MCF 10A (cell line): ENCODE measurements at regions of chr7 and their contacts with region 1.

Region 1: DNA sequence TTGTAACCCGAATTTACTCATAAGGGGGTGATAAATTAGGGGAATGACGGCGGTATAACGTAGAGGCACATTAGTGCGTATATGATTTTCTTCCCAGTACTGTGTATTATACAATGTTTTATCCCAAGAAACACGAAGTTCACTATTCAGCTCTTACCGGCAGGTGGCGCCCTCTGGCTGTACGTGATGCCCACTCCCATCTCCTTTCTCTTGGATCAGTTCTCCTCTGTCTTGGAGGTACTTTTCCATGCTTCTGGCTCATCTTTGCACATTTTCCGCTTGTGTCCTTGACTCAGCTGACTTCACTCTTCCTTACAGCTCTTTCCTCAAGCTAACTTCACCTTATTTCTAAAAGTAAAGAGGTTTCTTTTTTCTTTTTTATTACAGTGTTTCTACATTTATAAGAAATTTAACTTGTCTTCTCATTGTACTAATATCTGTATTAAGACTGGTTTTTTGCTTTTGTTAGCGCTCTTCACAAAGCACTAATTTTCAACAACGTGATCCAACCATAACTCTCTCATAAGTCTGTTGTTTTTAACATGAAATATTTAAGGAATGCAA is 21.3 kb downstream of the TMEM176B start:
- DNase-seq: peak; percentile 75
- H3K4me3 Mint-ChIP-seq: no peak overlapping the region
- H3K27ac Mint-ChIP-seq: no peak overlapping the region
- H3K4me1 Mint-ChIP-seq: no peaks in the 10 kb centered on the region
- H3K27me3 Mint-ChIP-seq: peaks cover 23% of the 10 kb centered on the region
- CTCF ChIP-seq: peak; percentile 76

Region 2: DNA sequence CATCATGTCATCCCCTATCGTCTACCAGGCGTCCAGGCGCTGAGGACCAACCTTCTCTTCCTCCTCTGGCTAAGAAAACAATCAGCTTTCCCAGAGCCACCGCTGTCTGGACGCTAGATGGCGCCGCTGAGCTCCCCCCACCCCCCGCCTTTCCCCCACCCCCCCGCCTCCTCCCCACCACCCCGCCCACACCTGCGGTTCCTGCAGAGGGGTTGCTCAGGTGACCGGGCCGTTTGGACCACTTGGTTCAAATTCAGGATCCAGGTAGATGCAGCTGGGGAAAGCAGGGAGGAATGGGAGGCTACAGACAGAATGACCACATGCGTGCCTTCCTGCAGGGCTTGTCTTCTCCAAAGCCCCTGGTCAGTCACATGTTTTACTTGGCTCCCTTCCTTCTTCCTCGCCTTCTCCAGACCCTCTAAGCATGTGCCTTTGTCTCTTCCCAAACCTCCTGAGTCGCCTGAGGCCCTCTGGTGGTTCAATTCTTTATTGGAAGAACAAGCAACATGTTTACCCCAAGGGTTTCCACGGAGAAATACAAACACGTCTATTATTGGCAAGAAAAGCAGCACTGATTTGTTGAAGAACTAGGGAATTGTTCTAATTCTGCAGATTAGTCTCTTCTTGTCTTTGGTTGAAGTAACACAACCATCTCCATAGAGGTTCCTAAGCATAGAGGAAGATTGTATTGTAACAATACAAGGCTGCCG is 98.2 kb after region 1 on chr7:
- CTCF ChIA-PET with region 1: interaction called, 37 read pairs
- POLR2A ChIA-PET with region 1: interaction called, 3 read pairs
- intact Hi-C with region 1: loop called (anchors 1 kb)
- DNase-seq: peak; percentile 63
- H3K4me3 Mint-ChIP-seq: no peak overlapping the region
- H3K27ac Mint-ChIP-seq: no peak overlapping the region
- H3K4me1 Mint-ChIP-seq: peaks cover 12% of the 10 kb centered on the region
- H3K27me3 Mint-ChIP-seq: peaks cover 38% of the 10 kb centered on the region
- CTCF ChIP-seq: peak; percentile 16